ENCODE measurements at regions of chr1 and their contacts with region 1.

Region 1: DNA sequence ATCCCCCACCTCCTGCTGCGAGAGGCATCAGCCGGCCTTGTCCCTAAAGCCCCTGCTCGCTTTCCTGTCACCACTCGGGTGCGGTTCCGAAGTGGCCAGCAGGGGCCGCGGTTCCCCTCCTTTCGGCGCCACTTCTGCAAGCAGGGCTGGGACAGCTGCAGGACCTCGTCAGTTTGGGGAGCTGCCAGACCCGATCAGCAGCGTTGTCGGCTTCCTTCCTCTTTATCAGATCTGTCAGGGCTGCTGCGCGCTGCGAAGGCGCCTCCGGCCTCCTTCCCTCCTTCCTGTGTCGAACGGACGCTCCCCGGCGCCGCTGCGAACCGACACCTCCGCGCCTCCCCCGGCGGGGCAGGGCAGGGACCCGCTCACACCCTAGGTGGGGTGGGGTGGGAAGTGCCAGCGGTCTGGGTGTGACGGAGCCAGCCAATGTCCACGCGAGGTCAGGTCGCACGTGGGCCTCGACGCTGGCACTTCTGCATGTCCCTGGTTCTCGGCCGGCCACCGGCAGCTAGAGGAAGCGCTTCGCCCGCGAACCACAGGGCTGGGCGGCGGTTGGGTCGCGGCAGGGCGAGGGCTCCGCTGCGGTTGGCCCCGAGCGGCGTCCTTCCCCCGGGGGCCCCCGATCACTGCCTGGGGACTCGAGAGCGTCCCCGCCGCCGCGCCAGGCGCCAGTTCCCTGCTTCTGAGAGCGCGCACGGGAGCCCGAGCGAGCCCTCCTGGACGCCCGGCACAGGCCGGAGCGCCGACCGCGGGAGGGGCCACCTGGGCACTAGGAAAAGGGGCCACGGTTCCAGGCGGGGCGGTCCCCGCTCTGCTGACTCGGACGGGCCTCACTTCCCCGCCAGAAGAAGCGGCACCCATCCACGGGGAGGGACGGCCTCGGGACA is 81.8 kb downstream of the RUNX3 start:
- DNase-seq: peak; percentile 96
- ATAC-seq: peak; percentile 96
- H3K4me3 Mint-ChIP-seq: peak overlapping the region; percentile 59
- H3K27ac Mint-ChIP-seq: no peak overlapping the region
- H3K4me1 Mint-ChIP-seq: peaks cover 7% of the 10 kb centered on the region
- H3K27me3 Mint-ChIP-seq: peaks cover 1% of the 10 kb centered on the region
- CTCF ChIP-seq: peak; percentile 94

Region 2: DNA sequence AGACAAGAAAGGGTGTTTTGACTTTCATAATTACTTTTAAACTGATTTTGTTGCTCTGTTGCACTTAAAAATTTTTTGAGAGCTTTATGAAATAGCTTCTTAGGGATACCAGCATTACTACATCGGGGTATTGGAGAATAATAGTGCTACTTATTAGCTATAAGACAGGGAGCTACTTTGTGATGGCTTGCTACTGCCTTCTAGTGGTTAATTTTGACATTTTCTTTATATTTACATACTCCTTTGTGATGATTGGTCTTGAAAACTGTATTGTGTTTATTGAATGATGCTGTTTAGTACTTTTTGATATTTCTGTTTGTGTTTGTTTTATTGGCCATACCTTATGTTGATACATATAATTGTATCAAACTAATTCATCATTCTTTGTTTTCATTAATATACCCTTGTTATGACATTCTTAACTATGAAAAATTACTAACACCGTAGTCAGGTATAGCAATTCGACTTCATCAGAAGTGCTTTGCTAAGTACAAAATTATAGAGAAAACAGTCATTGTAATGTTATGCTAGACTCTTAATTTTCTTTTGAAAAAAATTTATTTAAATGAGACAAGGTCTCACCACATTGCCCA is 17.5 kb before region 1 on chr1:
- CTCF ChIA-PET with region 1: interaction called, 21 read pairs
- POLR2A ChIA-PET with region 1: no interaction called
- intact Hi-C with region 1: no loop called
- DNase-seq: no peak
- ATAC-seq: no peak
- H3K4me3 Mint-ChIP-seq: no peak overlapping the region
- H3K27ac Mint-ChIP-seq: no peak overlapping the region
- H3K4me1 Mint-ChIP-seq: no peaks in the 10 kb centered on the region
- H3K27me3 Mint-ChIP-seq: peaks cover 2% of the 10 kb centered on the region
- CTCF ChIP-seq: peak; percentile 96

Region 3: GRCh38 chr1:24930204-24931145 is 82.2 kb after region 1 on chr1 and contains the start of gene RUNX3:
- CTCF ChIA-PET with region 1: interaction called, 10 read pairs
- POLR2A ChIA-PET with region 1: interaction called, 3 read pairs
- intact Hi-C with region 1: no loop called
- DNase-seq: peak; percentile 92
- ATAC-seq: peak; percentile 81
- H3K4me3 Mint-ChIP-seq: peak within 1 kb of the TSS; percentile 96
- H3K27ac Mint-ChIP-seq: peak within 1 kb of the TSS; percentile 90
- H3K4me1 Mint-ChIP-seq: peaks cover 60% of the 10 kb centered on the region
- H3K27me3 Mint-ChIP-seq: no peaks in the 10 kb centered on the region
- CTCF ChIP-seq: no peak
- total RNA-seq, gene RUNX3: 180 to 183 TPM

Region 4: GRCh38 chr1:25063591-25064416 is 215.6 kb after region 1 on chr1:
- CTCF ChIA-PET with region 1: no interaction called
- POLR2A ChIA-PET with region 1: no interaction called
- intact Hi-C with region 1: no loop called
- DNase-seq: no peak
- ATAC-seq: no peak
- H3K4me3 Mint-ChIP-seq: no peak overlapping the region
- H3K27ac Mint-ChIP-seq: no peak overlapping the region
- H3K4me1 Mint-ChIP-seq: peaks cover 29% of the 10 kb centered on the region
- H3K27me3 Mint-ChIP-seq: no peaks in the 10 kb centered on the region
- CTCF ChIP-seq: no peak

Region 5: DNA sequence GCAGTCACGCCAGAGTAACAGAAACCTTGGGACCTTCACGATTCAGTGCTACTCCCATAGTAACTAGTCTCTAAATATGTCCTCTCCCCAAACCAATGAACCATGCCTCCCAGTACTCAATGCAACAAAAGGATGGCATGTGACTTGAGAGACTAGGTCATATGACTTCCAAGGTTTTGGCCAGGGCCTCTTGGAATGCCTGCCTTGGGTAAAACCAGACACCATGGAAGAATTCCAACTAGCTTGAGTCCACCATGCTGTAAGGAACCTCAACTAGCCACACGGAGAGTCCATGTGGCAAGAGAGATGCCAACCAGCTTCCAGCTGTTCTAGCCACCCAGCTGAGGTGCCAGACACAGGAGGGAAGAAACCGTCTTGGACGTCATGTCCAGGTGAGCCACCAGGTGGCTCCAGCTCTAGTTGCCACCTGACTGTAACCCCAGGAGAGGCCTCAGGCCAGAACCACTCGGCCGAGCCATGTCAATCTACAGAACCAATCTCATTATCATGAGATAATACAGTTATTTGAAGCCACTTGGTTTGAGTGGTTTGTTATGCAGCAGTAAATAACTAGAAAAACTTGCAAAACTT is 269.1 kb after region 1 on chr1:
- CTCF ChIA-PET with region 1: interaction called, 15 read pairs
- POLR2A ChIA-PET with region 1: no interaction called
- intact Hi-C with region 1: no loop called
- DNase-seq: peak; percentile 60
- ATAC-seq: no peak
- H3K4me3 Mint-ChIP-seq: no peak overlapping the region
- H3K27ac Mint-ChIP-seq: no peak overlapping the region
- H3K4me1 Mint-ChIP-seq: peaks cover 40% of the 10 kb centered on the region
- H3K27me3 Mint-ChIP-seq: peaks cover 1% of the 10 kb centered on the region
- CTCF ChIP-seq: peak; percentile 49

Region 6: DNA sequence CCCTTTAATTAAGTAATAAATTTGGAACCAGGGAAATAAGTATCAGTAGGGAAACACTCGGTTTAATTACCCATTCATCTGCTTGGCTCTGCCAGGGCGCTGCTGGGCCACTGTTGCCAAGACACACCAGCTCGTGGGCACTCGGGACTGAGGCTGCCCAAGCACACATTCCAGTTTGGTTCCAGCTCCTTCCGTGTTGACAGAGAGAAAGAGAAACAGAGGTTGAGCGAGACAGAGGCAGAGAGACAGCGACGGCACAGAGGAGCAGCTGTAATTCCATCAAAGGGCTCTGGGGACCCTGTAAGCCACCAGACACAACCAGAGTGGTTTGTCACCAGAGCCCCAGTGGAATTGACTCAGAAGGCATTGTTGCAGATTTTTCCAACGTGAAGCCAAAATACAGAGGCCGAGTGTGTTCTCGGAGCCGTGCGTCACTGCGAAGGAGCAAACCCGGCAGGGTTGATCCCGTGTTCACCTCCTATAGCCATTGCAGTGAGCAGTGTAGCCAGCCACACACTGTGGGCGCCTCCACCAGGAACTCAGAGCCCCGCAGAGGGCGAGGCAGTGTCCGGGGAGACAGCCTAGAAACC is 350.5 kb after region 1 on chr1:
- CTCF ChIA-PET with region 1: interaction called, 73 read pairs
- POLR2A ChIA-PET with region 1: no interaction called
- intact Hi-C with region 1: loop called (anchors 5 kb)
- DNase-seq: peak; percentile 42
- ATAC-seq: peak; percentile 81
- H3K4me3 Mint-ChIP-seq: peak overlapping the region; percentile 1
- H3K27ac Mint-ChIP-seq: peak overlapping the region; percentile 18
- H3K4me1 Mint-ChIP-seq: peaks cover 12% of the 10 kb centered on the region
- H3K27me3 Mint-ChIP-seq: no peaks in the 10 kb centered on the region
- CTCF ChIP-seq: peak; percentile 30

Measured in activated CD8-positive, alpha-beta T cell treated with anti-CD3 and anti-CD28 coated beads for 36 hours (primary cell).